Psoas muscle (tissue), 8 donors: ENCODE measurements at regions of chr1 and their contacts with region 1.

Region 1: DNA sequence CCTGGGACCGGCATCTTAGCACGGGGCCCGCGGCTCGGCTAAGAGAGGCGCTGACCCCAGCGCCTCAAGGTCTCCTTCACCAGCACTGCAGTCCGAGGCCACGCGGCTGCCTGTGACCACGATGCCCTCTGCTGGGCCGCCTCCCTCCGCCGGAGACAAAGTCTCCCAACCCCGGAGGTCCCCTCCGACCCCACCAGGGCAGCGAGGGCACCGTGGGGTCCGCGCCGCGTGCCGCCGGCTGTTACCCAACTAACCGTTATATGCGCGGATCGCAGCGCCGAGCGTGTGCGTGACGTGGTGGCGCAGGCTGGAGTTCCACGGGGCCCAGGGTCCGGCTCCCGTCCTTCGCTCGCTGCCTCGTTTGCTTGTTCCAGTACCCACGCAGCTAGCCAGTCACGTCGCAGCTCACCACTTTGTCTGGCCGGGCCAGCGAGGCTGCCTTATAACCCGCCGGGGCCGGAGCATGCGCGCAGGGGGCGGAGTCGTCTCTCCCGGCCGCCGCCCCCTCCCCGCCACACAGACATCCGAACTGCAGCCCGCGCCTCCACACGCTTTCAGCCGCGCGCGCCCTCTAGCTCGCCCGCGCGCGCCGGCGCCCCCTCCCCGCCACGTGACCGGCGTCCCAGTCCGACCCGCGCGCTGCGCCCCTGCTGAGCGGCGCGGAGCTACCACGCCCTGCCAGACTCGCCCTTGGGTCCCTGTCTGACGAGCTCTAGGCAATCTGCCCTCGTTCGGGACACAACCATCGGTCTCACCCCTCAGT is at the start of gene SLC16A1:
- DNase-seq: peak; percentile 95 to 96
- ATAC-seq: peak; percentile 87 to 93 (median 90)
- H3K4me3 ChIP-seq: peak within 1 kb of the TSS; percentile 77
- H3K27ac ChIP-seq: peak within 1 kb of the TSS; percentile 96
- H3K4me1 ChIP-seq: peaks cover 21% of the 10 kb centered on the region
- H3K27me3 ChIP-seq: no peaks in the 10 kb centered on the region
- CTCF ChIP-seq: peak; percentile 12
- total RNA-seq, gene SLC16A1: 42.3 to 78.9 (median 53.3) TPM

Region 2: DNA sequence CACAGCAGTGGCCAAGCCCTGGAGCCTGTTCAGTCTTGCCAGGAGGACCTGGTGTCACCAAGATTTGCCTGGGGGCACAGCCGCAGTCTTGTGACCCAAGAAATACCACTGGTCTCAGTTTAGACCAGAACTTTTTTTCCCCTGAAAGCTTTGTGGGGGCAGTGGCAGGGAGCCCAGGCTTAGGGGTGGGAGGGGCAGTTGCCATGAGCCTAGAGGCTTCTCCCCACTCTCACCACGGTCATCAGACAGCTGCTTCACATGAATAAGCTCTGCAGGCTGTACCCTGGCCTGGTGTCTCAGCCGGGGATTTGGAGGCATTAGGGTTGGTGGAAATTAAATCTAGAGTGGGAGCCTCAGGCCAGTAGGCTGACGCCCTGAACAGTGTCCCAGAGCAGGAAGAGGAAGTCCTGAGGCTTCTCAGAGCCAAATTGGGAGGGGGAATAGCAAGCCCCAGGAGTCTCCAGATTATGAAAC is 73.7 kb before region 1 on chr1:
- intact Hi-C with region 1: loop called in 1 of 2 experiments (anchors 5 kb)
- DNase-seq: no peak
- ATAC-seq: peak in 1 of 4 donors; percentile 26
- H3K4me3 ChIP-seq: no peak overlapping the region
- H3K27ac ChIP-seq: no peak overlapping the region
- H3K4me1 ChIP-seq: no peaks in the 10 kb centered on the region
- H3K27me3 ChIP-seq: no peaks in the 10 kb centered on the region
- CTCF ChIP-seq: no peak

Region 3: GRCh38 chr1:112935461-112936289 is 20.3 kb before region 1 on chr1:
- intact Hi-C with region 1: loop called in 1 of 2 experiments (anchors 2 kb)
- DNase-seq: no peak
- ATAC-seq: no peak
- H3K4me3 ChIP-seq: no peak overlapping the region
- H3K27ac ChIP-seq: peak overlapping the region; percentile 70
- H3K4me1 ChIP-seq: peaks cover 36% of the 10 kb centered on the region
- H3K27me3 ChIP-seq: no peaks in the 10 kb centered on the region
- CTCF ChIP-seq: no peak

Region 4: DNA sequence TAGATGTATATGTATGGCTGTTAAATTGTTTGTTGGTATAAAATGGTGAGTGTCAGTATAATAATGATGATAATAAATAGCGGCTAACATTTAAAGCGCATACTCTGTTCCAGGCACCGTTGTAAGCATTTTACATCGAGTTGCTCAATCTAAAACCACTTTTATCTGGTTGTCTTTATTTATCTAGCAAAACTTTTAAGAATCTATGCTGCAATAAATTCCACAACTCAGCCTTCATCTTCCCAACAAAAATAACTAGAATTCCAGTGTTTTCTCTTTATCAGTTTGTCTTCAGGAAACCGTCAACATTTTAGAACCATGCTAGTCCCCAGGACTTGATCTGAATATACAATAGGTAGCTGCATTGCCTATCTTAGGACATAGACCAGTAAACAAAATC is 19.4 kb after region 1 on chr1:
- intact Hi-C with region 1: no loop called
- DNase-seq: no peak
- ATAC-seq: no peak
- H3K4me3 ChIP-seq: no peak overlapping the region
- H3K27ac ChIP-seq: no peak overlapping the region
- H3K4me1 ChIP-seq: no peaks in the 10 kb centered on the region
- H3K27me3 ChIP-seq: no peaks in the 10 kb centered on the region
- CTCF ChIP-seq: no peak

Region 5: DNA sequence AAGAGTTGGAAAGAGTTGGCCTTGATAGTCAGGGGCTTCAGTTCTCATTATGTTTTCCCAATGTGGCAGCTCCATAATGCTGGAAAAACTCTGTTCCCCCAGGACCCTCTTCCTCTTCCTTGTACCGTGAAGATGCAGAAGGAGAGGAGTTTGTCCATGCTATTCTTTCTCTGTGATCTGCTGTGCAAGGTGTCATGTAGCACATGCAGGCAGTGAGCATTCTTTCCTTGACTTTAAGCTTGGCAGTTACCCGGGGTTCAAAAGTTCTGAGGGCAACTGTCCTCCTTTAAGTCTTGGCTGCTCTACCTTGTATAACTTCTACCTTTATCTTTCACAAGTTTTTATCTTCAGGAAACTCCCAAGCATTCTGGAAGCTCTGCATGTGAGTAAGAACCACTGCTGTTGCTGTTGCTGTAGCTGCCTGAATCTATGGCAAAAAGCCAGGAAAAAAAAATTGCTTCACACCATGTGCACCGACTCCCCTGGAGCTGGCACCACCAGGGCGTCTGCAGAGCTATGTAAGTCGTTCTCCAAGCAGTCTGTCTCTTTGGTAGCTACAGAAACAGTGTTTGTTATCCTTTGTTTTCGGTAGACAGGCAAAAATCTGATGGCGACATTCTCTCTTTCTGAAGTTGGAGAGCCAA is 42.8 kb after region 1 on chr1:
- intact Hi-C with region 1: loop called (anchors 2 to 5 kb)
- DNase-seq: peak; percentile 51 to 79
- ATAC-seq: peak; percentile 73 to 82 (median 78)
- H3K4me3 ChIP-seq: peak overlapping the region; percentile 1
- H3K27ac ChIP-seq: peak overlapping the region; percentile 81
- H3K4me1 ChIP-seq: peaks cover 47% of the 10 kb centered on the region
- H3K27me3 ChIP-seq: no peaks in the 10 kb centered on the region
- CTCF ChIP-seq: no peak

Region 6: GRCh38 chr1:113042285-113043143 is 86.6 kb after region 1 on chr1:
- intact Hi-C with region 1: loop called in 1 of 2 experiments (anchors 5 kb)
- DNase-seq: peak; percentile 71 to 82
- ATAC-seq: peak; percentile 91 to 97 (median 94)
- H3K4me3 ChIP-seq: no peak overlapping the region
- H3K27ac ChIP-seq: no peak overlapping the region
- H3K4me1 ChIP-seq: peaks cover 7% of the 10 kb centered on the region
- H3K27me3 ChIP-seq: no peaks in the 10 kb centered on the region
- CTCF ChIP-seq: peak; percentile 66

Region 7: DNA sequence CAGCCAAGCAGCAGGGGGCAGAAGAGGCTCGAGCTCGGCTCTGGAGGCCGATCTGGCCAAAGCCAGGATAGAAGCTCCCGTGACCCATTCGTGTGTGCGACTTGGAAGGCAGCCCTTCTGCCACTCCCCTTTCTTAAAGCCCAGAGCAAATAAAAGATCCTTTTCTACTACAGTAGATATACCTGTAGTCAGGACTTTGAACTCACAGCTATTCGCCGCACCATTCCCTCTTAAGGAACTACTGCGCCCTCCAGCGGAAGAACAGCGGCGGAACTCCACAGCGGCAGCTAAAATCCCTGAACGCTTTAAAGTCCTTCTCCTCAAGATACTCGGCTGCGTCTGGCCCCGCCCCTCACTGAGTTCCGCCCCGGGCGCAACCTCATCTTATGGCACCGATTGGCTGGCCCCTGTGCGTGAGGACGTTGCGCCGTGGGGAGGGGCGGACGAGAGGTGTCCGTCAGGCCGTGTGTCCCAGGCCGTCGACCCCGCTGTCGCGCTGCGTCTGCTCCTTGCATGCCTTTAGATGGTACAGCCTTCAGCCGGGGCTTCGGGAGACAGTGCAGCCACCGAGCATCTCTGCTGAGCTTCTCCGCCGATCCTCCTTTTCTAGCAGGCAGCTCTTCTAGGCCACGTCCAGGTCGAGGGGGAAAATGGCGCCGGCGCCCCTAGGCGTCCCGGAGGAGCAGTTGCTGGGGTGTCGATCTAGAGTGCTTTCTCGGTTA is 117.0 kb after region 1 on chr1 and contains the start of gene LRIG2:
- intact Hi-C with region 1: loop called in 1 of 2 experiments (anchors 5 kb)
- DNase-seq: peak; percentile 99
- ATAC-seq: peak; percentile 99 to 100 (median 100)
- H3K4me3 ChIP-seq: peak within 1 kb of the TSS; percentile 98
- H3K27ac ChIP-seq: peak within 1 kb of the TSS; percentile 92
- H3K4me1 ChIP-seq: peaks cover 24% of the 10 kb centered on the region
- H3K27me3 ChIP-seq: no peaks in the 10 kb centered on the region
- CTCF ChIP-seq: peak; percentile 80
- total RNA-seq, gene LRIG2: 3.4 to 6.0 (median 5.0) TPM